ENCODE measurements at regions of chr11 and their contacts with region 1.

Region 1: GRCh38 chr11:45964911-45965389 is 42.5 kb downstream of the LARGE2 start:
- DNase-seq: peak; percentile 76 to 86 (median 80)
- H3K4me3 ChIP-seq: no peak overlapping the region
- H3K27ac ChIP-seq: no peak overlapping the region
- H3K4me1 ChIP-seq: peaks cover 0 to 6% (median 4%) of the 10 kb centered on the region in 4 experiments
- H3K27me3 ChIP-seq: no peaks in the 10 kb centered on the region

Region 2: DNA sequence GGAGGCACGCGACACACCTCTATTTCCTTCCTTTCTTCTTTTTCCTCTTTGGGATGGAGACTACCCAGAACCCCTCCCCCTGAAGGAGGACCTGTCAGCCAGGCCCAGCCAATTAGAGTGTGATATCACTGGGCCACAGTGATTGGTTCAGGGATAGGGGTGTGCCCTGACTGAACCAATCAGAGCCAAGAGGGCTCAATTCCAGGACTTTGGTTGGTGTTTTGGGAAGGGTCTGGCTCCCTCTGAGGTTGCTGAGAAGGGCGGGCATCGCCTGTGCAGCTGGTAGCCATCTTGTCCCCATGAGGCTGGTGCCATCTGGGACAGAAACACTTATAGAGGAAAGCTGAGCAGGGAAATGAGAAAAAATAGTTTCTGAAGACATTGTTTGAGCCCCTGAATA is 371.0 kb before region 1 on chr11:
- CTCF ChIA-PET with region 1: no interaction called
- POLR2A ChIA-PET with region 1: no interaction called
- DNase-seq: no peak
- H3K4me3 ChIP-seq: no peak overlapping the region
- H3K27ac ChIP-seq: no peak overlapping the region
- H3K4me1 ChIP-seq: no peaks in the 10 kb centered on the region
- H3K27me3 ChIP-seq: peaks cover 0 to 28% (median 18%) of the 10 kb centered on the region in 5 experiments

Region 3: GRCh38 chr11:45982656-45983470 is 17.9 kb after region 1 on chr11:
- CTCF ChIA-PET with region 1: interaction called, 17 read pairs
- POLR2A ChIA-PET with region 1: no interaction called
- DNase-seq: peak in 2 of 3 donors; percentile 48 to 73
- H3K4me3 ChIP-seq: no peak overlapping the region
- H3K27ac ChIP-seq: peak overlapping the region in 1 of 2 experiments; percentile 44
- H3K4me1 ChIP-seq: no peaks in the 10 kb centered on the region
- H3K27me3 ChIP-seq: no peaks in the 10 kb centered on the region

Region 4: GRCh38 chr11:45993531-45994001 is 28.6 kb after region 1 on chr11:
- CTCF ChIA-PET with region 1: interaction called, 13 read pairs
- POLR2A ChIA-PET with region 1: no interaction called
- DNase-seq: no peak
- H3K4me3 ChIP-seq: no peak overlapping the region
- H3K27ac ChIP-seq: no peak overlapping the region
- H3K4me1 ChIP-seq: no peaks in the 10 kb centered on the region
- H3K27me3 ChIP-seq: no peaks in the 10 kb centered on the region

Region 5: GRCh38 chr11:46001448-46001914 is 36.5 kb after region 1 on chr11:
- CTCF ChIA-PET with region 1: interaction called, 40 read pairs
- POLR2A ChIA-PET with region 1: no interaction called
- DNase-seq: no peak
- H3K4me3 ChIP-seq: no peak overlapping the region
- H3K27ac ChIP-seq: no peak overlapping the region
- H3K4me1 ChIP-seq: peaks cover 0 to 7% (median 6%) of the 10 kb centered on the region in 4 experiments
- H3K27me3 ChIP-seq: no peaks in the 10 kb centered on the region

Region 6: DNA sequence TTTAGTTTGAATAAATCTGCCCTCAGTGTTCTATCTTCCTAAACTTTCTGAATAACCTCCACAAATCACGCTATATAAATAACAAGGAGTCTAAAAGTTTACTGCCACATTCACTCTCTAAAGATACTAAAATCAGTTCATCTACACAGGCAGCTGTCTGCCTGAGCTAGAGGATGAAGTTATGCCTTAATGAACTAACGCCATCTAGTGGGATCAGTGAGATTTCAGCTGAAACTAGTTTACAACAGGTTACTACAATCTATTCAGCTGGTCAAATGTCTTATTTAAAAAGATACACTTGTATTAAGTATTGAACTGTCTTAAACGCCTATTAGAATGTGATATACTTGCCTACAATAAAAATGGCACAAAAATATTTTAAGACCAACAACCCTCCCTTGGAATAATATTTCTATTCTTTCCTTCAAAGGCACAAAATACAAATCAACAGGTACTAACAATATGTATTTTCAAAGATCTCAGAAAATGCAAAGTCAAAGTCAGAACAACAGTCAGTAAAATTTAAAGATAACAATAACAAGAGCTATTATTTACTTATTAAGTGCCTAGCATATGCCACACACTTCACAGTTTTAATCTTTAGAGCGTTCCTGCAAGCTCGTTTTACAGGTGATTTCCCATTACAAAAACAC is 41.6 kb after region 1 on chr11:
- CTCF ChIA-PET with region 1: interaction called, 40 read pairs
- POLR2A ChIA-PET with region 1: no interaction called
- DNase-seq: peak; percentile 65 to 82 (median 77)
- H3K4me3 ChIP-seq: no peak overlapping the region
- H3K27ac ChIP-seq: no peak overlapping the region
- H3K4me1 ChIP-seq: peaks cover 0 to 7% (median 6%) of the 10 kb centered on the region in 4 experiments
- H3K27me3 ChIP-seq: no peaks in the 10 kb centered on the region

Measured in common myeloid progenitor, CD34-positive (primary cell).